Endothelial cell of umbilical vein (primary cell): ENCODE measurements at regions of chr9 and their contacts with region 1.

Region 1: GRCh38 chr9:113591001-113591898 is 127.7 kb downstream of the RGS3 start:
- DNase-seq: peak; percentile 79
- H3K4me3 ChIP-seq: no peak overlapping the region
- H3K27ac ChIP-seq: peak overlapping the region; percentile 51
- H3K4me1 ChIP-seq: peaks cover 68% of the 10 kb centered on the region
- H3K27me3 ChIP-seq: no peaks in the 10 kb centered on the region
- CTCF ChIP-seq: peak; percentile 90 to 91
- POLR2A ChIP-seq: no peak

Region 2: DNA sequence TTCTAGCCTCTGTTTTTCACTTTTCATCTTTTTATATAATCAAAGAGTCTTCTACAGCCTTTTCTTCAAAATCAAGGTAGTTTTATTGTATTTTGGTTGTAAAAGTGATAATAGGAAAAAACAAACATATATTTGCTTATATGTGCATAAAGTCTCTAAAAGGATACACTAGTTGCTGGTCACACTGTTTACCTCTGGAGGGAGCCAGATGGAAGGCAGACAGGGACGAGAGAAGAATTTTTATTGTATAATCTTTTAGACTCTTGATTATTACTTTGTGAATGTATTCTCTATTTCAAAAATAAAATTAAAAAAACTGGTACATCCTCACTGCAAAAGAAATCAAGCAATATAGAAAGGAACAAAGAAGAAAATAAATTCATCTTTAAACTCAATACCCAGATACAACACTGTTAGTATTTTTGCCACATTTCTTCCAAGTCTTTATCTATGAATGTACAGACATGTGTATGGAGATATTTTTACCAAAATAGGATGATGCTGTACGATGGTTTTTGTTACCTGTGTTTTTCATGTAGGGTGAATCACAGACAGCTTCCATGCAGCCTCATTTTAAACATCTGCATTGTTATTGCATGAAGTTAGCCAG is 281.9 kb before region 1 on chr9:
- CTCF ChIA-PET with region 1: no interaction called
- POLR2A ChIA-PET with region 1: no interaction called
- dilution Hi-C with region 1: no loop called
- intact Hi-C with region 1: loop called (anchors 2 kb)
- DNase-seq: peak; percentile 55
- H3K4me3 ChIP-seq: no peak overlapping the region
- H3K27ac ChIP-seq: no peak overlapping the region
- H3K4me1 ChIP-seq: no peaks in the 10 kb centered on the region
- H3K27me3 ChIP-seq: no peaks in the 10 kb centered on the region
- CTCF ChIP-seq: peak; percentile 41 to 53
- POLR2A ChIP-seq: no peak

Region 3: DNA sequence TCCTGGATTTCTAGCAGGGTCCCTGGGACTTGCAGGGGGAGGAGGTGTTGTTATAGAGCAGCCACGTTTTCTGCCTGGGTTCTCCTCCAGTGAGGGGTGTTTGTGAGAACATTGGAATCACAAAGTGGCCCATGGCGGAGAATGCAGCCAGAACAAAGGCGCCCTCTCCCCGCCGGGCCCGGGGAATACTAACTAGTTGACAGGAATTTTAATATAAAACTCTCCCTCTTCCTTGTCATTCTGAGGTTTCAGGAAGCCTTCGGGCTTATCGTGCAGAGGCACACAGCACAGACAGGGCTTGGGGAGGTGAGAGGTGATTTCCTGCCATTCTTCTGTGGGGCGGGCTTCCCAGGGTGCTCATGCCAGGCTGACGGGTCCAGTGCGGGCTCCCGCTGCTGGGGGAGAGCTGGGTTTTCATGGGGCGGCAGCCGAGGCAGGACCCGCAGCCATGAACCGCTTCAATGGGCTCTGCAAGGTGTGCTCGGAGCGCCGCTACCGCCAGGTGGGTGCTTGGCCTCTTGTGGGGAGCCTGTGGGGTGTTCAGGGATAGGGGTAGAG is 90.0 kb before region 1 on chr9:
- CTCF ChIA-PET with region 1: interaction called, 13 read pairs
- POLR2A ChIA-PET with region 1: no interaction called
- dilution Hi-C with region 1: no loop called
- intact Hi-C with region 1: loop called (anchors 1 kb)
- DNase-seq: peak; percentile 98
- H3K4me3 ChIP-seq: peak overlapping the region; percentile 94 to 99 (median 94)
- H3K27ac ChIP-seq: peak overlapping the region; percentile 100
- H3K4me1 ChIP-seq: peaks cover 34% of the 10 kb centered on the region
- H3K27me3 ChIP-seq: no peaks in the 10 kb centered on the region
- CTCF ChIP-seq: peak in 1 of 2 donors; percentile 22
- POLR2A ChIP-seq: peak; percentile 88

Region 4: DNA sequence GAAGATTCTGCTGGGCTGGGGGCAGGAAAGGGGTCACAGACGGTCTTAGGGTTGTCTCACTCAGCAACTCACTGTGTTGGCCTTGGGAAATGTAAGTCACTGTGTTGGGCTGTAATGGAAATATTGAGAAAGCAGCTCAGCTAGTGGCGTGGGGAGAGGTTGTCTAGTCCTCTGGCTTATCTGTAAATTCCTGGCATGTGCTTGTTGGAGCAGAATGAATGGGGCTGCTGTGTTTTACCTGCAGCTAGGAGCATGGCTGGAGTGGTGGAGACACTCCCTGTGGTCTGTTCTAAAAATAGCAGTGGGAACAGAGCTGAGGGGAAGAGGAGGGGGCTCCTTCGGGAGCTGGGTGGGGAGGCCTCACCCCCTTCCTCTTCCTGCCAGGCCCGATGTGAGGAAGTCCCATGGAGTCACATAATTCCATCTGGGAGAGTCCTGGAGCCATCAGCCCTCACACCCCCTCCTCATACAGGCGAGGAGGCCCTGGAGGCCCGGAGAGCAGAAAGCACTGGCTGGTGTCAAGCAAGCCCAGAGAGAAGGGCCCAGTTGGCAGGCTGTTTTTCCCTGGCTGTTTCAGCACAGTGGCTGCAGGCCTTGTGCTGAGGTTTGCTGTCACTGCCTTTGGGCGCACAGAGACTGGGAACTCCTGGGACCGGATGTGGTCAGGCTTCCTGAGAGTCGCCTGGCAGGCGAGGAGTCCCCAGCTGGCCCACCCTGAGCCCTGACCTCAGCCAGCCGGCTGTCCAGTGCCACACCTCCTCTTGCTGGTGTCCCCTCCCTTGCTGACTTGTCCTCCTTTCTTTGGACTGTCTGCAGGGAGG is 42.8 kb before region 1 on chr9:
- CTCF ChIA-PET with region 1: interaction called, 11 read pairs
- POLR2A ChIA-PET with region 1: interaction called, 4 read pairs
- dilution Hi-C with region 1: no loop called
- intact Hi-C with region 1: loop called (anchors 2 kb)
- DNase-seq: peak; percentile 60
- H3K4me3 ChIP-seq: no peak overlapping the region
- H3K27ac ChIP-seq: peak overlapping the region; percentile 19
- H3K4me1 ChIP-seq: peaks cover 30% of the 10 kb centered on the region
- H3K27me3 ChIP-seq: no peaks in the 10 kb centered on the region
- CTCF ChIP-seq: no peak
- POLR2A ChIP-seq: no peak

Region 5: DNA sequence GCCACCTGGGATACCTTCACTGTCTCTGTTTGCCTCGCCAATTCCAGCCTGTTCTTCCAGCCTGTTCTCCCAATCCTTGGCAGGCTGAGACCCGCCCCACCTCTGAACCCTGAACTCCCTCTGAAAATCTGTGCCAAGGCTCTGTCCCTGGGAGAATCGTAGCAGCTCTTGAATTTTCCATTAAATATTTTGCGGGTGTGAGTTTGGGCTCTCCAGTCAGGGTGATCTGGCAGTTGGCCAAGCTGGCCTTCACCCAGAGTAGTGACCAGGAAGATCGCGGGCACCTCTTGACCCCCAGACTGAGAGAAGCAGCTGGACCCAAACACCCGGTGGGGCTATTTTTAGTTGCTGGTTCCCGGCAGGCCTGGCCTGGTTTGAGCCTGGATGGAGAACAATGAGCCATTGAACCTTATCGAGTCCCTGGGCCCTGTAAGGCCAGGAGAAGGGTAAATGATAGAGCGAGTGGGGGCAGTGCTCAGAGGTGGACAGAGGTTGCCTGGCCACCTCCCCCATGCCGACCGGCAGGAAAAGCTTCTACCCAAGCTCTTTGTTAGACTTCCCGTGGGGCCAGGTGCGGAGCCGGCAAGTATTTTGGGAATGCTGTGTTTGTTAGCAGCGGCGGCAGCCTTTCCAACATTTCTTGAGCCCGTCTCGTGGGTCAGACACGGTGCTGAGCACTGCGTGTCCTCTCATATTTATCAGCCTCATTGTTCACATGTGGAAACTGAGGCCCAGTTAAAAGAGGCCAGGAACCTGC is 18.5 kb after region 1 on chr9:
- CTCF ChIA-PET with region 1: interaction called, 15 read pairs
- POLR2A ChIA-PET with region 1: interaction called, 7 read pairs
- dilution Hi-C with region 1: no loop called
- intact Hi-C with region 1: loop called (anchors 1 kb)
- DNase-seq: peak; percentile 96
- H3K4me3 ChIP-seq: no peak overlapping the region
- H3K27ac ChIP-seq: peak overlapping the region; percentile 98
- H3K4me1 ChIP-seq: peaks cover 26% of the 10 kb centered on the region
- H3K27me3 ChIP-seq: no peaks in the 10 kb centered on the region
- CTCF ChIP-seq: no peak
- POLR2A ChIP-seq: no peak

Region 6: DNA sequence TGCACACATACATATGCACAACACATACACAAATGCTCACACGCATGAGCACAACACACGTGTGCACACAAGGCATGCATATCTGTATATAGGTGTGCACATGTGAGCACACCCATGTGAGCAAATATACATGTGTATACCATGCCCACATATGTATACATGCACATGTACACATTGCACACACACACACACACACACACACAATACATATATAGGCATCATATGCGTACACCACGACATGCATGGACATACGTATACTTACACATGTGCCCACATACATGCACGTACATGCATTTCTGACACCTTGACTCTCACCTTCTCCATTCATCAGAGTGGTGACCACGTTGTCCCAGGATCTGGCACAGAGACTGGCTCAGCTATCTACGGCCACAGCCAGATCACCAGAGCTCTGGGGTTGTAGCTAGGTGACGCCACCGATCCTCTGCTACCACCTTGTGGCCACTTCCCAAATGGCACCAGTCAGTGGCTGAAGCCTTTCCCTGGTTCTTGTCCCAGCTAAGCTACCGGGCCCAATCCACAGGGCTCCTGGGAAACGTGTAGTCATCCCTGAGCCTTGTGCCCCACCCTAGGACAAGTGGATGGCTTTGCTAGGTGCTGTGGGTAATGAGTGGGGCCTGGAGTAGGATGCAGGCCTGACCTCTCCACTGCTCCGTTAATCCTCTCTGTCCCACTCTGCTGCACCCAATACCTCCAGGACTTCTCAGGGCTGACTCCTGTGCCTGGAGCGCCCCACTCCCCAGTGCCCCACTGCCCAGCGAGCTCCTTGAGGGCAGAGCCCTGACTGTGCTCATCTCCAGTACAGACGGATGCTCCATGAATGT is 66.7 kb after region 1 on chr9:
- CTCF ChIA-PET with region 1: interaction called, 1,173 read pairs
- POLR2A ChIA-PET with region 1: interaction called, 71 read pairs
- dilution Hi-C with region 1: loop called (anchors 10 kb)
- intact Hi-C with region 1: loop called (anchors 1 kb)
- DNase-seq: peak; percentile 89
- H3K4me3 ChIP-seq: no peak overlapping the region
- H3K27ac ChIP-seq: no peak overlapping the region
- H3K4me1 ChIP-seq: peaks cover 45% of the 10 kb centered on the region
- H3K27me3 ChIP-seq: peaks cover 0 to 8% of the 10 kb centered on the region in 2 experiments
- CTCF ChIP-seq: peak; percentile 92 to 96
- POLR2A ChIP-seq: no peak